T-cell (primary cell): ENCODE measurements at regions of chr17 and their contacts with region 1.

Region 1: DNA sequence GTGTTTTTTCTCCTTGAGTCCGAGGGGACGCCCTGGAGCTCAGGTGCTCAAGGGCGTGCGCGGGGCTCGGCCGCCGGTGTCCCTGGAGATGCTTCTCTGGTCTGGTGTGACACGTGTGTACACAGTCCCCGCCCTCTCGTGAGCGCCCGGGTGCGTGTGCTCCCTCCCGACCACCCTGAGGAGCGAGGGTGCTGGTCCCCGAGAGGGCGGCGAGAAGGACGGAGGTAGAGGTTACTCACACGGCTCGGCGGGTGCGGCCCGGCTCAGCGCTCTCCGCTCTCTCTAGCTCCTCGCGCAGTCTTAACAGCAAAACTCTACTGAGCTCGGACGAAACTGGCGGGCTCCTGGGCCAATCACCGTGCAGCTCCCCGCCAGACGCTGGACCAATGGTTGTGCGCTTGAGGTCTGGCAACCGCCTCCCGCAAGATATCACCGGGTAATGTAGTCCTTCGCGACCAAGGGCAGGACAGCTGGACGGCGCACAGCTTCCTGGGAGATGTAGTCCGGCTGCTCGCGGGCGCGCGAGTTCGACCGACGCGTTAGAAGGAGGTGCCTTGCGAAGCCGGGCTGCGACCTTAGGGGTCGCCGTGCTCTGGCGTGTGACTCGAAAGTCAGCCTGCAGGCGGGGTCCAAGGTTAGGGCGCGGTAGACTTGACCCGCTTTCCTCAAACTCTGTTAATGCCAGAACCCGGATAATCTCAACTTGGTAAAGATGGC is at the start of gene SLC25A19:
- DNase-seq: peak; percentile 85 to 98 (median 97)
- ATAC-seq: peak; percentile 92 to 96 (median 94)
- H3K4me3 ChIP-seq: peak within 1 kb of the TSS; percentile 93 to 99
- H3K4me3 Mint-ChIP-seq: peak within 1 kb of the TSS; percentile 94 to 100 (median 99)
- H3K27ac ChIP-seq: peak within 1 kb of the TSS; percentile 100
- H3K27ac Mint-ChIP-seq: peak within 1 kb of the TSS; percentile 100
- H3K4me1 ChIP-seq: peaks cover 7 to 22% of the 10 kb centered on the region in 2 experiments
- H3K4me1 Mint-ChIP-seq: peaks cover 14 to 27% (median 21%) of the 10 kb centered on the region in 3 donors
- H3K27me3 ChIP-seq: no peaks in the 10 kb centered on the region
- H3K27me3 Mint-ChIP-seq: no peaks in the 10 kb centered on the region
- total RNA-seq, gene SLC25A19: 12.4 to 30.1 (median 25.9) TPM

Region 2: DNA sequence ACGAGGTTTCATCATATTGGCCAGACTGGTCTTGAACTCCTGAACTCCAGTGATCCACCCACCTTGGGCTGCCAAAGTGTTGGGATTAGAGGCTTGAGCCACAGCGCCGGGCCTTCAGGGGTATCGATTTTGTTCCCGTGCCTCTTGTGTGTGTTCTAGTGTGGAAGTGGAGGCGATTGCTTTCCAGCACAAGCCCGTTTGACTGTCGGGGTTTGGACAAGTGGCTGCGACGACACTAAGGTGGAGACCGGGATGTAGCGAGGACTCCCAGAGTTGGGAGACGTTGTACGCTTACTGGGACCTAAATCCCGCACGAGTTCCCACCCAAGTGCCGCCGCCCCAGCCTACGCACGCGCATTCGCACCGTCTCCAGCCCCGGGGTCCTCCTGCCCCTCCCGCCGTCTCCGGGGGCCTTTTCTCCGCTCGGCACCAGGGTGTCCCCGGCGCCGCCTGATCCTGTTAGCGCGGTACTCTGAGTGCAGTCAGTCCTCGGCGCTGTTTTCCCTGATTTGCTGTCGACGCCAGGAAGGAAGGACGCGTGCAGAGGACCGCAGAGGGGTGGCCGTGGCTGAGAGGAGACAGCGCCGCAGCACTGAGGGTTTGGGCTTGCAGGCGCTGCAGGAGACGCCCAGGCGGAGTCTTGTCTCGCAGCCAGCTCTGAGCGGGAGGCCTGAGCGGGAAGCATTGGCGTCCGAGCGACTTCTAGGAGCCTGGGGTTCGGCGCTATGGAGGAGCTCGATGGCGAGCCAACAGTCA is 84.1 kb before region 1 on chr17 and contains the start of gene NUP85:
- CTCF ChIA-PET with region 1: interaction called in 1 of 2 experiments, 11 read pairs
- POLR2A ChIA-PET with region 1: no interaction called
- DNase-seq: peak; percentile 78 to 95 (median 89)
- ATAC-seq: peak; percentile 85 to 95 (median 92)
- H3K4me3 ChIP-seq: peak within 1 kb of the TSS; percentile 95 to 99
- H3K4me3 Mint-ChIP-seq: peak within 1 kb of the TSS; percentile 93 to 95 (median 94)
- H3K27ac ChIP-seq: peak within 1 kb of the TSS; percentile 91
- H3K27ac Mint-ChIP-seq: peak within 1 kb of the TSS; percentile 99 to 100
- H3K4me1 ChIP-seq: peaks cover 8 to 25% of the 10 kb centered on the region in 2 experiments
- H3K4me1 Mint-ChIP-seq: peaks cover 23 to 37% (median 32%) of the 10 kb centered on the region in 3 donors
- H3K27me3 ChIP-seq: no peaks in the 10 kb centered on the region
- H3K27me3 Mint-ChIP-seq: no peaks in the 10 kb centered on the region
- total RNA-seq, gene NUP85: 56.2 to 128 (median 106) TPM

Region 3: DNA sequence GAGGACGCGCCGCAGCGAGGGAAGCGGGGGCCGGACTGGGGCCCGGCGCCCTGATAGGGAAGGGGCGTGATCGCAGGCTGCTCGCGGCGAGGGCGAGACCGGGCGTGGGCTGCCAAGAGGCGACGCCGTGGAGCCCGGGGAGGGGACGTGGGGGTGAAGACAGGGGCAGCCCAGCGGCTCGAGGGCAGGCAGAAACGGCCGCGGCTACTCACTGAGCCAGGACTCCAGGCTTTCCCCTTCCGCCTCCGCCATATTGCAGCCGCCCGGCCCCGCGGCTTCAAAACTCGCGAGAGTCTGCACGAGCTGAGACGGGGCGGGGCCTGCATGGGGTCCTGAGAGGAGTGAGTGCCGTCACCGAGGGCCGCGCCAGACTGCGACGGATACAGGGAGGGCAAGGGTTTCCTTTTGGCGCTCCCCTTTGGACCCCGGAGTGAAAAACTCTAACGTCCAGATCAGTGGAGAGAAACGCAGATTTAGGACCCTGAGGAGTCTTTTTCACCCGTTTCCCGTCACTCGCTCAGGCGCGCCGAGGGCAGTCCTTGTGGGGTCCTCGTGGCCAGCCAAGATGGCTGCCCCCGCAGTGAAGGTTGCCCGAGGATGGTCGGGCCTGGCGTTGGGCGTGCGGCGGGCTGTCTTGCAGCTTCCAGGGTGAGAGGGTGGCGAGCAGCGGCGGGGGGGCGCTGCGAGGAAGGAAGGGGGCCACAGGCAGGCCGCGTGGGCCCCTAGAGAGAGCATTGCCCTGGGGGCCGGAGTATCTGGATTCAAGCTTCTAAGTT is 27.7 kb before region 1 on chr17 and contains the starts of genes GGA3 and MRPS7:
- CTCF ChIA-PET with region 1: interaction called in 1 of 2 experiments, 14 read pairs
- POLR2A ChIA-PET with region 1: interaction called, 5 to 11 read pairs
- DNase-seq: peak; percentile 90 to 97 (median 95)
- ATAC-seq: peak; percentile 92 to 98 (median 97)
- H3K4me3 ChIP-seq: peak within 1 kb of the TSS; percentile 78 to 79
- H3K4me3 Mint-ChIP-seq: peak within 1 kb of the TSS; percentile 94 to 97 (median 95)
- H3K27ac ChIP-seq: peak within 1 kb of the TSS; percentile 99
- H3K27ac Mint-ChIP-seq: peak within 1 kb of the TSS; percentile 99 to 100
- H3K4me1 ChIP-seq: peaks cover 22 to 32% of the 10 kb centered on the region in 2 experiments
- H3K4me1 Mint-ChIP-seq: peaks cover 53 to 59% (median 56%) of the 10 kb centered on the region in 3 donors
- H3K27me3 ChIP-seq: no peaks in the 10 kb centered on the region
- H3K27me3 Mint-ChIP-seq: no peaks in the 10 kb centered on the region
- total RNA-seq, gene GGA3: 78.1 to 118 (median 102) TPM
- total RNA-seq, gene MRPS7: 29.8 to 39.4 (median 33.6) TPM

Region 4: DNA sequence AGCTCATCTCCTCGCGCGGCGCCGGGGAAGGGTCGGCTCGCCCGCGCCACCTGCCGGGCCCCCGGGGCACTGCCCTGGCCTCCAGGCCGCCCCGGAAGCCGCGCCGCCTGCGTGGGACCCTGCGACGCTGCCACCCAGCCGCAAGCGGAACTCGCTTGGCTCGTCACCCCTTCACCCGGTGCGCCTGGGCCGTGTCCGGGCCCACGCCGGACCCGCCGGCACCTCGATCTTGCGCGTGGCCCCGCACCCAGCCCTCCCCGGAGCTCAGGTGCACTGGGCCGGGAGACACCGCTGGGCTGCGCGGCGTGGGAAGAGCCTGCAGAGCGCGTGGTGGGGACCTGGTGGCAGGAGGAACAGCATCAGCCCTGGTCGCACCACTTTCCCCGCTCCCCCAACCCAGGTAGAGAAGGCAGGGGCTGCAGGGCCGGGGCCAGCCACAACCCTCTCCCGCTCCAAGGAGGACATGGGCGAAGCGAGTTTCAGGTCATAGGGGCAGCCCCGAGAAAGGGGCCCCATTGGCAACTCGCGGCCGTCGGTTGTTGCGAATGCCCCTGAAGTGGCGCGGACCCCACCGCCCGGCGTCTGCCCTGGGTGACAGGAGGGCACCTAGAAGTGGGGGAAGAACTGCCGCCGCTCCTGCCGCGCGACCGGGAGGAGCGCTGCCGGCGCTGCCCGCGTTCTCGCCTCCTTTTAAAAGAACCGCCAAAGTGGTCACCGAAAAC is 17.9 kb before region 1 on chr17:
- CTCF ChIA-PET with region 1: interaction called, 3 to 80 read pairs
- POLR2A ChIA-PET with region 1: interaction called in 1 of 2 experiments, 23 read pairs
- DNase-seq: peak; percentile 67 to 94 (median 83)
- ATAC-seq: peak; percentile 87 to 94 (median 90)
- H3K4me3 ChIP-seq: peak overlapping the region; percentile 79 to 92
- H3K4me3 Mint-ChIP-seq: peak overlapping the region; percentile 80 to 84 (median 81)
- H3K27ac ChIP-seq: peak overlapping the region; percentile 85
- H3K27ac Mint-ChIP-seq: peak overlapping the region; percentile 81 to 91
- H3K4me1 ChIP-seq: peaks cover 5 to 36% of the 10 kb centered on the region in 2 experiments
- H3K4me1 Mint-ChIP-seq: peaks cover 24 to 40% (median 31%) of the 10 kb centered on the region in 3 donors
- H3K27me3 ChIP-seq: no peaks in the 10 kb centered on the region
- H3K27me3 Mint-ChIP-seq: no peaks in the 10 kb centered on the region

Region 5: DNA sequence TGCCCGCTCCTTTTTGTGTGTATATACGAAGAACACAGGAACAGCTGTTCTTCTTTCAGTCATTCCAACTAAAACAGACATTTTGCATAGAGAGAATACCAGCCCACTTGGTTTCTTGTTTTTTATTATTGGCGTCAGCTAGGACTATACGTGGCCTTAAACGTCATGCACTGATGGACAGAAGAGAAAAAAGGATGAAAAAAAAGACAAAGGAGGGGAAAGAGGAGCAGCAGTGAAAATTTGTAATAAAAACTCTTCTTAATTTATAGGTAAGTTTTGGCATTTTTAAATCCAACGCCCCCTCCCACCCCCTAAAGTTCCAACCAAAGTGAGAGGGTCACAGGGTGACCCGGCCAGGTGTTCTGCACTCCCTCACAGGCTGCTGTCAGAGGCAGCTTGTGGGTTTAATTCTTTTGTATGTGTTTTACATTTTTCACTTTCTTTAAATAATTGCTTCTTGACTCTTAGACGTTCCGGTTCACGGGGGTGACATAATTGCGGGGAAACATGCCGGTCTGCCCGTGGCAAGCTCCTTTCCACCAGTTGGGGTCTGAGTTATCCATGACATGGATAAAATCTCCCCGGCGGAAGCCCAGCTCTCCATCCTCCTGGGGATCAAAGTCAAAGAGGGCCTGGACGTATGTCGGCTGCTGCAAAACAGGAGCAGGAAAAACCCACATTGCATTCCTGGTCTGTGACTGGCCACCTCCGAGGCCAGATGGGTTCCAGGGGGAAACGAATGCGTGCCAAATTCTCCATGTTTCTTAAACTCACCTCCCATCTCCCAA is 30.8 kb after region 1 on chr17:
- CTCF ChIA-PET with region 1: interaction called, 9 to 10 read pairs
- POLR2A ChIA-PET with region 1: interaction called in 1 of 2 experiments, 5 read pairs
- DNase-seq: no peak
- ATAC-seq: no peak
- H3K4me3 ChIP-seq: no peak overlapping the region
- H3K4me3 Mint-ChIP-seq: no peak overlapping the region
- H3K27ac ChIP-seq: no peak overlapping the region
- H3K27ac Mint-ChIP-seq: no peak overlapping the region
- H3K4me1 ChIP-seq: peaks cover 0 to 8% of the 10 kb centered on the region in 2 experiments
- H3K4me1 Mint-ChIP-seq: peaks cover 5 to 8% (median 8%) of the 10 kb centered on the region in 3 donors
- H3K27me3 ChIP-seq: peaks cover 0 to 3% of the 10 kb centered on the region in 2 experiments
- H3K27me3 Mint-ChIP-seq: no peaks in the 10 kb centered on the region

Region 6: GRCh38 chr17:75405365-75406221 is 116.3 kb after region 1 on chr17 and contains the start of gene GRB2:
- CTCF ChIA-PET with region 1: interaction called in 1 of 2 experiments, 17 read pairs
- POLR2A ChIA-PET with region 1: interaction called in 1 of 2 experiments, 8 read pairs
- DNase-seq: peak; percentile 99 to 100 (median 99)
- ATAC-seq: peak; percentile 82 to 92 (median 88)
- H3K4me3 ChIP-seq: peak within 1 kb of the TSS; percentile 98 to 100
- H3K4me3 Mint-ChIP-seq: peak within 1 kb of the TSS; percentile 93 to 98 (median 97)
- H3K27ac ChIP-seq: peak within 1 kb of the TSS; percentile 80
- H3K27ac Mint-ChIP-seq: peak within 1 kb of the TSS; percentile 93 to 94
- H3K4me1 ChIP-seq: peaks cover 25 to 29% of the 10 kb centered on the region in 2 experiments
- H3K4me1 Mint-ChIP-seq: peaks cover 43 to 50% (median 46%) of the 10 kb centered on the region in 3 donors
- H3K27me3 ChIP-seq: no peaks in the 10 kb centered on the region
- H3K27me3 Mint-ChIP-seq: peaks cover 0 to 2% of the 10 kb centered on the region in 2 donors
- total RNA-seq, gene GRB2: 103 to 133 (median 130) TPM